ENCODE measurements at regions of chr4 and their contacts with region 1.

Region 1: DNA sequence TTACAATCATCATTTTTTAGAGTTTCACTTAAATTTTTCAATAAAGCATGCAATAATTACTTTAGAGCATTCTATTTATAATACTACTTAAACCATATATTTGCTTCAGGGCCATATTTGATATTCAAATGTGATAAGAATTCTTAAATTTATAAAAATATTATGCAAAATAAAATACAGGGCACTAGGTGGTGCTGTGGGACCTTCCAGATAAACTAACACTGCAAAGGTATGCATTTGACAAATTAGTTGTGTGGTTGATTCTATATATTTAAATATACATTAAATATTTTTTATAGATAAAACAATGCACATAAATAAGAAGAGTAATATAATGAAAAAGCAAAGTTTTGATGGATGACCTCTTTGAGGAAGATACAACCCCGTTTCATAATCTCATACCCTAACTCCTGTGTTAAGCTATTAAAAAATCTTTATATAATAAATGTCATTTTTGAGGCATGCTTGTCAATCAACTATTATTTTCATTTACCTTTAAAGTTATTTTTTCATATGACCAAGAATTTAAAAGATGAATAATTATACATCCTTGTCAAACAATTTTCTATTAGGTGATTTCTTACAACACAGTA is 128.4 kb downstream of the REELD1 start:
- DNase-seq: peak; percentile 59
- H3K4me3 Mint-ChIP-seq: no peak overlapping the region
- H3K27ac Mint-ChIP-seq: no peak overlapping the region
- H3K4me1 Mint-ChIP-seq: peaks cover 7% of the 10 kb centered on the region
- H3K27me3 Mint-ChIP-seq: no peaks in the 10 kb centered on the region

Region 2: GRCh38 chr4:146175541-146176453 is 166.9 kb before region 1 on chr4 and contains the start of gene LSM6:
- CTCF ChIA-PET with region 1: no interaction called
- intact Hi-C with region 1: no loop called
- DNase-seq: peak; percentile 89
- H3K4me3 Mint-ChIP-seq: peak within 1 kb of the TSS; percentile 80
- H3K27ac Mint-ChIP-seq: peak within 1 kb of the TSS; percentile 90
- H3K4me1 Mint-ChIP-seq: peaks cover 48% of the 10 kb centered on the region
- H3K27me3 Mint-ChIP-seq: no peaks in the 10 kb centered on the region
- total RNA-seq, gene LSM6: 62.9 to 65.8 TPM

Region 3: DNA sequence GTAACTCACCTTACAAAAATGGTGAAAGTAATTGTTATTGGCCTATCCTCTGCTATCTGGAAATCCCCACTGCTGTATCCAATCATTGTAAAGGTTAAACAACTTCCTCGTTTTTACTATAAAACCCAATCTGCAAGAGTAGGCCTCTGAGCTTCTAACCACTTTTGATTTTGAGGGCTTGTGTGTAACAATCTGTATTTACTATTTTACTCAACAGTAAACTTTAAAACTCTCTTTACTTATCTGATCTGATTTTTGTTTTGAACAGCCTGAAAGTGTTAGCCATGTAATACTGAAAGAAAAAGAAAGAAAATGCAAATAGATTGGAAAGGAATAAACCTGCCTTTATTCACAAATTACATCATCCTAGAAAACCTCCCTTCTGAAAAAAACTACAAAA is 115.9 kb after region 1 on chr4:
- CTCF ChIA-PET with region 1: no interaction called
- intact Hi-C with region 1: loop called (anchors 1 kb)
- DNase-seq: peak; percentile 15
- H3K4me3 Mint-ChIP-seq: peak overlapping the region; percentile 63
- H3K27ac Mint-ChIP-seq: peak overlapping the region; percentile 91
- H3K4me1 Mint-ChIP-seq: peaks cover 32% of the 10 kb centered on the region
- H3K27me3 Mint-ChIP-seq: no peaks in the 10 kb centered on the region

Region 4: GRCh38 chr4:146638801-146639605 is 296.3 kb after region 1 on chr4 and contains the start of gene POU4F2:
- CTCF ChIA-PET with region 1: no interaction called
- intact Hi-C with region 1: loop called (anchors 2 kb)
- DNase-seq: peak; percentile 14
- H3K4me3 Mint-ChIP-seq: peak within 1 kb of the TSS; percentile 19
- H3K27ac Mint-ChIP-seq: no peak within 1 kb of the TSS
- H3K4me1 Mint-ChIP-seq: peaks cover 20% of the 10 kb centered on the region
- H3K27me3 Mint-ChIP-seq: peaks cover 85% of the 10 kb centered on the region
- total RNA-seq, gene POU4F2: not detected

Region 5: DNA sequence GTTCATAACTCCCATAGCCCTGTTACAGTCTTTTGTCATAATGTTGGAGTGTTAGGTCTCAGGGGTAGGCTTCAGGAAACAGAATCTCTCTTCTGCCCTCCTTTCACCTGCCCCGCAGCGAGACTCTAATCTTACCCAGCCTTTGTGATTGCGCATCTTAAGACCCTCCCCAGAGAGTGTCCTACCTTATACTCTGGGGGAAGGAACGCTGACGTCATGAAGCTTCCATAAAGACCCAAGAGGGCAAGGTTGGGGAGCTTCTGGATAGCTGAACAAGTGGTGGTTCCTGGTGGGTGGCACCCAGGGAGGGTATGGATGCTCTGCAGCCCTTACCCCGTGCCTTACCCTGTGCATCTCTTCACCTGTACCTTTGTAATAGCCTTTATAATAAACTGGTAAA is 395.9 kb after region 1 on chr4:
- CTCF ChIA-PET with region 1: no interaction called
- intact Hi-C with region 1: loop called (anchors 10 kb)
- DNase-seq: no peak
- H3K4me3 Mint-ChIP-seq: no peak overlapping the region
- H3K27ac Mint-ChIP-seq: no peak overlapping the region
- H3K4me1 Mint-ChIP-seq: no peaks in the 10 kb centered on the region
- H3K27me3 Mint-ChIP-seq: peaks cover 8% of the 10 kb centered on the region

Region 6: GRCh38 chr4:146852360-146852759 is 509.7 kb after region 1 on chr4:
- CTCF ChIA-PET with region 1: no interaction called
- intact Hi-C with region 1: no loop called
- DNase-seq: no peak
- H3K4me3 Mint-ChIP-seq: no peak overlapping the region
- H3K27ac Mint-ChIP-seq: no peak overlapping the region
- H3K4me1 Mint-ChIP-seq: no peaks in the 10 kb centered on the region
- H3K27me3 Mint-ChIP-seq: peaks cover 7% of the 10 kb centered on the region

Region 7: DNA sequence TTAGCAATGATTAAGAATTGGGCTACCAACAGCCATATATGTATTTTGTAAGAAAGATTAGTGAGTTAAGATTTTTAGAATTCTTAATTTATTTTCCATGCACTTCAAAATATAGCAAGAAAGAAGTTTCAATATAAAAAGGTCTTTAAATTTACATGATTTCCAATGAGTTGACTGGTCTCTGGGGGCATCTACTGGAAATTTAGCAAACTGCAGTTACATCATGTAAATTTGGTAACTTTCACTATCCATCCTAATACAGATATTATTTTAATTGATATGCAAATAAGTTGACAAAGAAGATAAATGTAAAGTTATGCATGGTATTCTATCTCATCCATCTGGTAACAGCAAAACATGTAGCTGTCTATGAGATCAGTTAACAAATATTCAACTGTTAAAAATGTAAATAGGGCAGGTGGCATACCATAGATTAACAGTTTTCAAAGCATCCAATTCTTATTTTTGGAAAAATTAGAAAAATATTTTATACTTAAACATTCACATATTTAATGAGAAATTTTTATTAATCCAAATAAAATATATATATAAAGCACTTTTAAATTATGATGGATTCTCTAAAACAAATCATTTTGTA is 573.9 kb after region 1 on chr4:
- CTCF ChIA-PET with region 1: interaction called, 4 read pairs
- intact Hi-C with region 1: loop called (anchors 1 kb)
- DNase-seq: peak; percentile 28
- H3K4me3 Mint-ChIP-seq: no peak overlapping the region
- H3K27ac Mint-ChIP-seq: no peak overlapping the region
- H3K4me1 Mint-ChIP-seq: no peaks in the 10 kb centered on the region
- H3K27me3 Mint-ChIP-seq: peaks cover 4% of the 10 kb centered on the region

Region 8: GRCh38 chr4:147096667-147097604 is 754.2 kb after region 1 on chr4:
- CTCF ChIA-PET with region 1: interaction called, 10 read pairs
- intact Hi-C with region 1: loop called (anchors 1 kb)
- DNase-seq: no peak
- H3K4me3 Mint-ChIP-seq: no peak overlapping the region
- H3K27ac Mint-ChIP-seq: no peak overlapping the region
- H3K4me1 Mint-ChIP-seq: no peaks in the 10 kb centered on the region
- H3K27me3 Mint-ChIP-seq: peaks cover 8% of the 10 kb centered on the region

Measured in activated naive CD4-positive, alpha-beta T cell treated with anti-CD3 and anti-CD28 coated beads for 36 hours (primary cell).